ENCODE measurements at regions of chr20 and their contacts with region 1.

Region 1: DNA sequence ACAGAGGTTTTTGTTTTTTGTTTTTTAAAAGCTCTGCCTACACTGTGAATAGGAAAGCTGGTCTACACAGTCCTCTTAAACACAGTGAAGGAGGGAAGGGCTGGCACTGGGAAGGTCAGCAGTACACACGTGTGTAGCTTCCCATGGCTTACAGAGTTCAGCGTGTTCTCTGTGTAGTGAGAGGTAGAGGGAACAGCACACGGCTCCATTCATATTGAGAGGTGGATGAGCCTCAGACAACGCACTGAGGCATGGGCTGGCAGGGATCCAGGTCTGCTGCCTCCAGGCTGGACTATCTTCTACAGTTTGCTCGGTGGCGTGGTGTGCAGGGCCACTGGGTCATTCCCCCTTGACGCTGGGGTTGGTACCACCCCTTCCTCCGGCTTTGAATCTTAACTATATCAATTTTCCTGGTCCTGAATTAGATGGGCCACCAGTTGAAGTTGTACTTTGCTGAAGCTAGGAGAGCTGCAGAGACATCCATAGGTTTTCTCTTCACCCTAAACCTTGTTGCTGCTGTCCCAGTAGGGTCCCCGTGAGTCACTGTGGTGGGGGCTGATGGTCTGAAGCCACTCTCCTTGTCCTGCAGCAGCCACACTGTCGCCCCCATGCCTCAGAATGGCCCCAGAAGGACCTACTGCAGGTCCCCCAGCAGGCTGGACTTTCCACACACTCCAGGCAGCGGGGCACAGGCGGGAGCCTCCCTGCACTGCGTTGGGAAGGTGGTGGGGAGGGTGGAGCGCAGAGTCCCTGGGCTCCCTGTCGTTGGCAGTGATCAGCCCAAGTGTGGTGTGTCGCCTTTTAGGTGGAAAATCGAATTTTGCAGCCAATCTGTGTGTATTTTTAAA is 2.0 kb downstream of the ARFGAP1 start:
- DNase-seq: no peak

Region 2: GRCh38 chr20:63223221-63224207 is 51.1 kb before region 1 on chr20:
- in situ Hi-C with region 1: loop called (anchors 5 kb)
- DNase-seq: peak; percentile 51